ENCODE measurements at regions of chr5 and their contacts with region 1.

Region 1: GRCh38 chr5:159331093-159331973 is 1.0 kb upstream of the IL12B start:
- DNase-seq: peak; percentile 72
- ATAC-seq: peak; percentile 48
- H3K4me3 Mint-ChIP-seq: peak overlapping the region; percentile 80
- H3K27ac Mint-ChIP-seq: peak overlapping the region; percentile 90
- H3K4me1 Mint-ChIP-seq: peaks cover 61% of the 10 kb centered on the region
- H3K27me3 Mint-ChIP-seq: no peaks in the 10 kb centered on the region
- CTCF ChIP-seq: no peak

Region 2: DNA sequence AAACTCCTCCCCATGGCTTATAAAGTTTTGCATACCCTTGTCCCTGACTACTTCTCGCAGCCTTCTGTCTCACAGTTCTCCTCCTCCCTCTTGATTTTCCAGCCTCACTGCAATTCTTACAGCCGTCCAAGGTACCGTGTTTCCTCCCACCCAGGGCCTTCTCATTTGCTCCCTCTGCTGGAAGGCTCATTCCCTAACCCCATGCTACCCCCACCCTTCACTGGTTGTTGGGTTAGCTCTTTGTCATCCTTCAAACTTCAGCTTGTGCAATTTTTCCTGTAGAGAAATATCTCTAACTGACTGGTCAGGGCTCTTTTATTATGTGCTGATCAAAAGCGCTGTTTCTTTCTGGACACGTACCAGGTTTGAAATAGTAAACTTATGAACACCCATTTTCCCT is 560.8 kb before region 1 on chr5:
- CTCF ChIA-PET with region 1: no interaction called
- POLR2A ChIA-PET with region 1: no interaction called
- intact Hi-C with region 1: no loop called
- DNase-seq: no peak
- ATAC-seq: no peak
- H3K4me3 Mint-ChIP-seq: peak overlapping the region; percentile 16
- H3K27ac Mint-ChIP-seq: peak overlapping the region; percentile 59
- H3K4me1 Mint-ChIP-seq: peaks cover 91% of the 10 kb centered on the region
- H3K27me3 Mint-ChIP-seq: no peaks in the 10 kb centered on the region
- CTCF ChIP-seq: no peak

Region 3: DNA sequence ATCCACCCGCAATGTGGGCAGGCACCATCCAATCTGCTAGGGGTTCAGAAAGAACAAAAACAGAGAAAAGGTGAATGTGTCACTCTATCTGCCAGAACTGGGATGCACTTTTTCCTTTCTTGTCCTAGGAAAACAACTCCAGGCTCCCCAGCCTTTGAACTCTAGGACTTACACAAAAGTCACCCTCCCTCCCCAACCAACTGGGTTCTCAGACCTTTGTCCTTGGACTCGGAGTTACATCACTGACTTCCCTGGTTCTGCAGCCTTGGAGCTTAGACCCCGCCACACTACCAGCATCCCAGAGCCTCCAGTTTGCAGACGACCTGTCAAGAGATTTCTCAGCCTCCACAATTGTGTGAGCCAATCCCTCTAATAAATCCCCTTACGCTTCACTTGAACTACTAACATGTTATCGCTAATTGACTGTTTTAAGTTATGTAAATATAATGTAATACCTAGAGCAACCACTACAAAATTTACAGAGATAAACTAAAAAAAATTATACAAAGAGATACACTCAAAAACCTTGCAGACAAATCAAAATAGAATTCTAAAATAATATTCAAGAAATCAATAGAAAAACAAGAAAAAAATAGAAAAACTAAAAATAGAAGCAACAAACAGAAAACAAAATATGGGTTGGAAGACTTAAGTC is 73.6 kb before region 1 on chr5:
- CTCF ChIA-PET with region 1: no interaction called
- POLR2A ChIA-PET with region 1: no interaction called
- intact Hi-C with region 1: no loop called
- DNase-seq: no peak
- ATAC-seq: no peak
- H3K4me3 Mint-ChIP-seq: no peak overlapping the region
- H3K27ac Mint-ChIP-seq: no peak overlapping the region
- H3K4me1 Mint-ChIP-seq: peaks cover 11% of the 10 kb centered on the region
- H3K27me3 Mint-ChIP-seq: peaks cover 14% of the 10 kb centered on the region
- CTCF ChIP-seq: no peak

Region 4: GRCh38 chr5:159286420-159287035 is 44.8 kb before region 1 on chr5:
- CTCF ChIA-PET with region 1: interaction called, 14 read pairs
- POLR2A ChIA-PET with region 1: no interaction called
- intact Hi-C with region 1: loop called (anchors 1 kb)
- DNase-seq: no peak
- ATAC-seq: peak; percentile 71
- H3K4me3 Mint-ChIP-seq: no peak overlapping the region
- H3K27ac Mint-ChIP-seq: no peak overlapping the region
- H3K4me1 Mint-ChIP-seq: no peaks in the 10 kb centered on the region
- H3K27me3 Mint-ChIP-seq: no peaks in the 10 kb centered on the region
- CTCF ChIP-seq: no peak

Region 5: GRCh38 chr5:159405611-159406031 is 74.3 kb after region 1 on chr5:
- CTCF ChIA-PET with region 1: interaction called, 5 read pairs
- POLR2A ChIA-PET with region 1: interaction called, 6 read pairs
- intact Hi-C with region 1: loop called (anchors 1 kb)
- DNase-seq: peak; percentile 35
- ATAC-seq: peak; percentile 86
- H3K4me3 Mint-ChIP-seq: peak overlapping the region; percentile 29
- H3K27ac Mint-ChIP-seq: peak overlapping the region; percentile 74
- H3K4me1 Mint-ChIP-seq: peaks cover 47% of the 10 kb centered on the region
- H3K27me3 Mint-ChIP-seq: no peaks in the 10 kb centered on the region
- CTCF ChIP-seq: no peak

Region 6: DNA sequence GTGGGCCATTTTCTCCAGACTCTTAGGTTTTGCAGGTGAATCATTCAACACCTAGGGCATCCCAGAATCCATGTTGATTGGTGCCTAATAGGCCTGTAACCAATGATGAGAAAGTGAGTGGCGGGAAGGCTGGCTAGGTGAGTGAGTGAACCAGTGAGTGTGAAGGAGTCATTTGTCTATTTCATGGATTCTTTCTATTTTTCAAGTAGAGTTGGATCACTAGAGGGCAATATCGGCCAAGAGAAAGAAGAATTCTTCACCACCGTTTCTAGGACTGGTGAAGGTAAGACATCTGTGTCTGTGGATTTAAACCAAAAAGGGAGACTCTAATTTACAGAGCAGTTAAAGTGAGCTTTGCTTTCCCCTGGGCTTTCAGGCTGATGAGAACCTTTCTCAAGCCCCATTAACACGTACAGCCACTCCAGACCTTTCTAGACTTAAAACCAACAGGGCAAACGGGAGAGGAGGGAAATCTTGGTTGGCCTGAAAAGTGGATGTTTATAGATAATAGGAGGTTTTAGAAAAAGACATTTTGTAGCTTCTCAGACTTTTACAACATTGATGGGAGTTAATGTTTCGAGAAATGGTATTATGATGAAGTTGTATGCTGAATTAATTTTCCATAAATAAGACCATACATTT is 113.2 kb after region 1 on chr5:
- CTCF ChIA-PET with region 1: interaction called, 4 read pairs
- POLR2A ChIA-PET with region 1: interaction called, 10 read pairs
- intact Hi-C with region 1: loop called (anchors 1 kb)
- DNase-seq: no peak
- ATAC-seq: peak; percentile 67
- H3K4me3 Mint-ChIP-seq: no peak overlapping the region
- H3K27ac Mint-ChIP-seq: no peak overlapping the region
- H3K4me1 Mint-ChIP-seq: peaks cover 6% of the 10 kb centered on the region
- H3K27me3 Mint-ChIP-seq: no peaks in the 10 kb centered on the region
- CTCF ChIP-seq: no peak

Region 7: DNA sequence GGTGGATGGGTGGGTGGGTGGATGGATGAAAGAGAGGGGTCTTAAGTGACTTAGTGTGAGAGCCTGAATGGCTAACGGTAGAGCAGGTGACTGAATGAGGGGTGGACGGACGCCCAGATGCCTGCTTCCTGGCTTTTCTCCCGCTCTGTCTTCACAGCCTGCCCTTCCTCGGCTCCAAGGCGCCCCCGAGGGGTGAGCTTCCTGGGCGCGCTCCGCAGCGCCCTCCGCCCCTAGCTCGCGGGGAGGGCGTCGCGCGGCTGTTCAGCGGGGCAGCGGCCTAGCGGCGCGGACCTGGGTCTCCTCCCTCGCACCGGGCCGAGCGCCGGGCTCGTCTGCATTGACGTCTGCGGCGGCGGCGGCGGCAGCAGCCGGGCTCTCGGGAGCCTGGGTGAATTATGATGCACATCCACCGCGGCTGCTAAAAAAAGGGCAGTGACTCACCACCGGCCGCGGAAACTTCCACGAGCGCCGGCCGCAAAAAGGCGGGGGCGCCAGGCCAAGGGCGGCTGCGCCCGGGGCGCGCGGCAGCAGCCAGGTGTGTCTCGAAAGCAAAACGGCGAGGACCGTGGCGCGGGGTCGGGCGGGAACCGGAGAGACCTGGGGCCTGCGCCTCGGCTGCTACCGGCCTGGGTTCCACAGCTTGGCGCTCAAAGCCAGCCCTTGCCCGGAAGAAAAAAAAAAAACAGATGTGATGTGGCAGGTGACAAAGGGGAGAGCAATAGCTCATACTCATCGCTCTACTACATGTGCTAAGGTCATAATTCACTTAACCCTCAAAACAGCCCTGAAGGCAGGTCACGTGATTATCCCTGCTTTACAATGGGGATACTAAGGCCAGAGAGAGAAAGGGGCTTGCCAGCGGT is 442.0 kb after region 1 on chr5:
- CTCF ChIA-PET with region 1: no interaction called
- POLR2A ChIA-PET with region 1: no interaction called
- intact Hi-C with region 1: loop called (anchors 1 kb)
- DNase-seq: peak; percentile 78
- ATAC-seq: peak; percentile 95
- H3K4me3 Mint-ChIP-seq: peak overlapping the region; percentile 74
- H3K27ac Mint-ChIP-seq: peak overlapping the region; percentile 56
- H3K4me1 Mint-ChIP-seq: peaks cover 12% of the 10 kb centered on the region
- H3K27me3 Mint-ChIP-seq: peaks cover 14% of the 10 kb centered on the region
- CTCF ChIP-seq: no peak

Region 8: DNA sequence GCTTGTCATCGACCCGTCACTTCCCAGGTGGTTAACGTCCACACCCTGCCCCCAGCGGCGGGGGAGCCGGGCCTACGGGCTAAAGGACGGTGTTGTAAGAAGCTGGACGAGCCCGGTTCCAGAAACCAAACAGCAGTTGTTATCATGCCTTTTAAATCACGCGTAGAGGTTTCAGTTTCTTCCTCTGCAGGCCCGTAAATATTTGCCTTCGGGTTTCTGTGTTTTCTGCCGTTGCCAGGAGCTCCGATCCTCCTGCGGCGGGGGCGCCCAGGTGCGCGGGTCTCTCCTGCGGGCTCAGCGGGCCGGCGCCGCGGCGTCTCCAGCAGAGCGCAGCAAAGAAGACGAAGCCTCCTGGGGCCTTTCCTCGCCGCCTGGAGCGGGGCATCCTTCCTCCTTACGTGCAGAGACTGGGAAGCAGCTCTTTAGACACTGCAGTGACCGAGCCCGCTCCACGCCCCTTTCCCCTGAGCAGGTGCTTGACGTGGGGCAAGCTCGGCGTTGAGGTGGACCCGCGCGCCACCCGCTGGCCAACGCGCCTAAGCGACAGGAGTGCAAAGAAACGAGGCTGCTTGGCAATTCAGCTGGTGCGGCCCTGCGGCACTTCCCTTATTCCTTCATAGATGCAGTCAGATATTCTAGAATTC is 655.8 kb after region 1 on chr5:
- CTCF ChIA-PET with region 1: interaction called, 6 read pairs
- POLR2A ChIA-PET with region 1: no interaction called
- intact Hi-C with region 1: loop called (anchors 1 kb)
- DNase-seq: peak; percentile 72
- ATAC-seq: peak; percentile 99
- H3K4me3 Mint-ChIP-seq: peak overlapping the region; percentile 70
- H3K27ac Mint-ChIP-seq: no peak overlapping the region
- H3K4me1 Mint-ChIP-seq: peaks cover 7% of the 10 kb centered on the region
- H3K27me3 Mint-ChIP-seq: peaks cover 14% of the 10 kb centered on the region
- CTCF ChIP-seq: no peak